Activated T-helper 1 cell treated with anti-CD3 and anti-CD28 coated beads, Interleukin-12 subunit alpha, Interleukin-12 subunit beta, Interleukin-2, Interleukin-4 antibody, amounts not matched to agents 30 ng/mL and 10 ng/mL and 1 ng/mL, durations not matched to agents 14 hours and 24 hours and 36 hours (primary cell): ENCODE measurements at regions of chrX and their contacts with region 1.

Region 1: DNA sequence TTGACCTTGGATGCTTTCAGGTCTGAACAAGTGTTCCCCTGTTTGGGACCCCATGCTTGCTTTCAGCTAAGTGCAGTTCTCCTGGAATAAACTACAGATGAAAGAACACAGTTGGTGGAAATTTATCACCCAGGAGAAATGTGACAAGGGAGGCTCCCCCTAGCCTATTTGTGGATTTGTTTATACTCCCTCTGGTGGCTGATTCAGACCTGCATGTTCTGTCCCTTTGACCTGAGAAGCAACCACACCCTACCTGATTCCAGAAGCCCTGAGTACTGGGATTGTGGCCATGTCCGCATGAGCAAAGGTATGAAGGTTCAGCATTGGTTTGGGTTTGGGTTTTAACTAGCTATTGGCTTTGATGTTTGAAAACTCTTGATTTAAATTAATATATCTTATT is 440.9 kb downstream of the MID1IP1 start:
- DNase-seq: no peak
- H3K4me3 Mint-ChIP-seq: no peak overlapping the region
- H3K27ac Mint-ChIP-seq: no peak overlapping the region
- H3K4me1 Mint-ChIP-seq: peaks cover 26% of the 10 kb centered on the region
- H3K27me3 Mint-ChIP-seq: no peaks in the 10 kb centered on the region

Region 2: DNA sequence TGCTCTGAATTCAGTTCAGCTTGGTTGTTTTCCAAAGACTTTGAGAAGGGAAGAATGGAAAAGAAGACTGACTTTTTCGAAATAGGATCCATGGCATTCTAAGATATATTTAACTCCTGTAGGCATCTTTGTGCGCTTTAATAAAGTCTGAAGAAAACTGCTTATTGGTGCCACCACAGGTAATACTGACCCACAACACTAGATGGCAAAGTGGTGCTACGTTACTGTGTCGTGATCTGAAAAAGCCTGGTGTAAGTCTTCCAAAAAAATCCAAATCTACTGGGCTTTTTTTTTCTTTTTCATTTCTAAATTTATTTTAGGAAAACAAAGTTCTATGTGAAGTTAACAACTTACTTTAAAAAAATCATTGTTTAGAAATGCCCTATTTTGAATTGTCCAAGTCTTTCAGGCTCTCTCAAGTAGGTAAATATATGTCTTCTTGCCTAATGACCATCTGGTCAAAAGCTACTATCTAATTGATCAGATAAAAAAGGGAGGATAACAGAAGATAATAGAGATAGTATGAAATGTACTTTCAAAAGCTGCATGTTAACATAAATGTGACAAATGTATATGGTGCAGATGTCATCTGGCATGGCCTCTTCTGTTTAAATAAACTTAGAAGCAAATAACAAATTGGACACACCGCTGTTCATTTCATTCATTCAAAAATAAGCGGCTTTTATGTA is 487.9 kb before region 1 on chrX:
- intact Hi-C with region 1: loop called (anchors 5 kb)
- DNase-seq: no peak
- H3K4me3 Mint-ChIP-seq: no peak overlapping the region
- H3K27ac Mint-ChIP-seq: no peak overlapping the region
- H3K4me1 Mint-ChIP-seq: no peaks in the 10 kb centered on the region
- H3K27me3 Mint-ChIP-seq: peaks cover 3% of the 10 kb centered on the region

Region 3: GRCh38 chrX:39162322-39162735 is 79.9 kb before region 1 on chrX:
- intact Hi-C with region 1: loop called (anchors 2 kb)
- DNase-seq: no peak
- H3K4me3 Mint-ChIP-seq: peak overlapping the region; percentile 22
- H3K27ac Mint-ChIP-seq: peak overlapping the region; percentile 71
- H3K4me1 Mint-ChIP-seq: peaks cover 45% of the 10 kb centered on the region
- H3K27me3 Mint-ChIP-seq: peaks cover 2% of the 10 kb centered on the region

Region 4: GRCh38 chrX:39196192-39197102 is 45.7 kb before region 1 on chrX:
- intact Hi-C with region 1: loop called (anchors 5 kb)
- DNase-seq: peak; percentile 44
- H3K4me3 Mint-ChIP-seq: peak overlapping the region; percentile 58
- H3K27ac Mint-ChIP-seq: peak overlapping the region; percentile 87
- H3K4me1 Mint-ChIP-seq: peaks cover 52% of the 10 kb centered on the region
- H3K27me3 Mint-ChIP-seq: no peaks in the 10 kb centered on the region

Region 5: GRCh38 chrX:39211526-39211925 is 30.7 kb before region 1 on chrX:
- intact Hi-C with region 1: loop called (anchors 2 kb)
- DNase-seq: no peak
- H3K4me3 Mint-ChIP-seq: no peak overlapping the region
- H3K27ac Mint-ChIP-seq: no peak overlapping the region
- H3K4me1 Mint-ChIP-seq: peaks cover 6% of the 10 kb centered on the region
- H3K27me3 Mint-ChIP-seq: no peaks in the 10 kb centered on the region

Region 6: GRCh38 chrX:39642082-39642481 is 399.9 kb after region 1 on chrX:
- intact Hi-C with region 1: no loop called
- DNase-seq: no peak
- H3K4me3 Mint-ChIP-seq: no peak overlapping the region
- H3K27ac Mint-ChIP-seq: no peak overlapping the region
- H3K4me1 Mint-ChIP-seq: peaks cover 26% of the 10 kb centered on the region
- H3K27me3 Mint-ChIP-seq: no peaks in the 10 kb centered on the region